ENCODE measurements at regions of chr5 and their contacts with region 1.

Region 1: DNA sequence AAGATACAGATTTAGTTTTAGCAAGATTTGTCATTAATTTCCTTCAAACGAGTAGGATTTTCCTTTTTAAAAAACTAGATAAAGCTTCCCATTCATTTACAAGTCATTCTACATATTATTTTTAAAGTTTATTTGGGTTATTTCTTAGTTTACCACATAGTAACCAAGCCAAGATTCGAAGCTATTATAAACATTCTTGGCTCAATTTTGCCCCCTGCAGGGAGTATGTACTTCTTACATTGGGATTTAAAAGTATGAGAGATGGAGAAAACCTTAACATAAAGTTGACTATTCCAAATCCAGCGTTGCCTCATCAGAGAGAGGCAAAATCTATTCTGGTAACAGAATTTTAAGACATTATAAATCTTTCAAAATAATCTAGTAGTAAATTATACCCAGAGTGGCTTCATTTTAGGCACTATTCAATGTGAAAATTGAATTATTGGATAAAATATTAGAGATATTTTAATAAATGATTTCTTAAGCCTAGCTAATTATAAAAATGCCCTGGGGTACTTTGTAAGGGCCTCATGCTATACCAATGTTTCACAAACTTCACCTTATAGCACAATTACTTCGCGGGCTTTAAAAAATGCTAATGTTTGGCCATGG is 39.1 kb downstream of the FBN2 start:
- DNase-seq: peak; percentile 18
- CTCF ChIP-seq: peak; percentile 27

Region 2: DNA sequence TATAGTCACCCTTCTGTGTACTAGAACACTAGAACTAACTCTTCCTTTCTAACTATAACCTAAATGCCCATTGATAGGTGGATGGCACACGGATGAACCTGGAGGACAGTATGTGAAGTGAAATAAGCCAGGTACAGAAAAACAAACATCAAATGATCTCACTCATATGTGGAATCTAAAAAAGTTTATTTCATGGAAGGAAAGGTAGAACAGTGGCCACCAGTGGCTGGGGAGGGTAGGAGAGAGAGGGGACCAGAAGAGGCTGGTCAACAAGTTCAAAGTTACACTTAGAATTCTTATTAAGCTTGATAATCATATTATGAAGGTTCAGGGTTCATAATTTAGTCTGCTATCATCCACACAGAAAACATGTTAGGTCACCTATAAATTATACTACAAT is 523.0 kb before region 1 on chr5:
- CTCF ChIA-PET with region 1: no interaction called
- POLR2A ChIA-PET with region 1: no interaction called
- DNase-seq: no peak
- CTCF ChIP-seq: no peak

Region 3: GRCh38 chr5:128213340-128213739 is 285.6 kb before region 1 on chr5:
- CTCF ChIA-PET with region 1: interaction called, 14 read pairs
- POLR2A ChIA-PET with region 1: no interaction called
- DNase-seq: no peak
- CTCF ChIP-seq: peak; percentile 75

Measured in GM10248 (cell line).